Right cardiac atrium (tissue), 5 donors: ENCODE measurements at regions of chr2 and their contacts with region 1.

Region 1: GRCh38 chr2:152335010-152335725 is at the start of gene FMNL2:
- DNase-seq: peak; percentile 86 to 94 (median 93)
- ATAC-seq: peak; percentile 96
- H3K4me3 ChIP-seq: peak within 1 kb of the TSS; percentile 79
- H3K27ac ChIP-seq: peak within 1 kb of the TSS; percentile 57
- H3K4me1 ChIP-seq: no peaks in the 10 kb centered on the region
- H3K27me3 ChIP-seq: no peaks in the 10 kb centered on the region
- total RNA-seq, gene FMNL2: 7.2 to 10.8 (median 9.9) TPM

Region 2: GRCh38 chr2:152189622-152190495 is 145.3 kb before region 1 on chr2:
- intact Hi-C with region 1: loop called in 2 of 4 experiments (anchors 10 kb)
- DNase-seq: peak in 2 of 3 donors; percentile 27 to 55
- ATAC-seq: peak; percentile 81 to 84
- H3K4me3 ChIP-seq: no peak overlapping the region
- H3K27ac ChIP-seq: no peak overlapping the region
- H3K4me1 ChIP-seq: no peaks in the 10 kb centered on the region
- H3K27me3 ChIP-seq: no peaks in the 10 kb centered on the region

Region 3: GRCh38 chr2:152466980-152467676 is 132.0 kb after region 1 on chr2:
- intact Hi-C with region 1: loop called in 1 of 4 experiments (anchors 10 kb)
- DNase-seq: no peak
- ATAC-seq: peak; percentile 41 to 56
- H3K4me3 ChIP-seq: no peak overlapping the region
- H3K27ac ChIP-seq: peak overlapping the region; percentile 33
- H3K4me1 ChIP-seq: peaks cover 23% of the 10 kb centered on the region
- H3K27me3 ChIP-seq: no peaks in the 10 kb centered on the region

Region 4: GRCh38 chr2:152627351-152627957 is 292.3 kb after region 1 on chr2:
- intact Hi-C with region 1: loop called (anchors 10 kb)
- DNase-seq: no peak
- ATAC-seq: peak; percentile 61 to 66
- H3K4me3 ChIP-seq: no peak overlapping the region
- H3K27ac ChIP-seq: no peak overlapping the region
- H3K4me1 ChIP-seq: no peaks in the 10 kb centered on the region
- H3K27me3 ChIP-seq: no peaks in the 10 kb centered on the region

Region 5: GRCh38 chr2:152635635-152636298 is 300.6 kb after region 1 on chr2:
- intact Hi-C with region 1: loop called in 1 of 4 experiments (anchors 10 kb)
- DNase-seq: peak; percentile 47 to 58 (median 53)
- ATAC-seq: peak; percentile 44 to 66
- H3K4me3 ChIP-seq: no peak overlapping the region
- H3K27ac ChIP-seq: no peak overlapping the region
- H3K4me1 ChIP-seq: no peaks in the 10 kb centered on the region
- H3K27me3 ChIP-seq: no peaks in the 10 kb centered on the region